Left colon (tissue), 2 donors: ENCODE measurements at regions of chr1 and their contacts with region 1.

Region 1: DNA sequence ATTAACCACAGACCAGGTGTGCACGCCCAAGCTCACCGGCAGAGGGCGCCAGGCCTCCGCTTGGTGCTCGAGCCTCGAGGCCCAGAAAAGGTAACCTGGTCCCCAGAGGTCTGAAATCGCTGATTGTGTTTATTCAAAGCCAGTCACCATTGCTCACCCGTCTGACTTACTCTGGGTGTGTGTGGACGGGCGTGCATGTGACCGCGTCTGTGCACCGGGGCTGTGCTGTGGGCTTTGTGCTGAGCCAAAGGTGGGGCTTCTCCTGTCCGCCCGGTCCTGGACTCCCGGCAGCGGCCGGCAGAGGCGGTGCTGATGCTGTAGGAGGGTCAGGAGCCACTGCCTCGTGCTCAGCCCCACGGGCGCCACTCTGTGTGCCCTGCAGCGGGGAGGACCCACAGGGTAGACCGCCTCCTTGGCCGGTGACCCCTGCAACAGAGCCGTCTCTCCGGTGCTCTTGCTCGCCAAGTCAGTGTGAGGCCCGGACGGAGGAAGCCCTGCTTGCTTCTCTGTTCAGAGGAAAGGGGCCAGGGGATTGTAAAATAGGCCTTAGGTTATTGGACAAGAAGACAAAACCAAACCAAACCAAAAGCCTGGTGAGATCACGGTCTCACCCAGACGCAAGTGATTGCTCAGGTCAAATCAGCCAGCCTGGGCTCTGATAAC is 32.0 kb upstream of the BTG2 start:
- DNase-seq: peak; percentile 87 to 92
- ATAC-seq: peak; percentile 79

Region 2: GRCh38 chr1:203326830-203327683 is 53.7 kb after region 1 on chr1:
- intact Hi-C with region 1: loop called in 1 of 2 experiments (anchors 5 kb)
- DNase-seq: peak; percentile 95 to 96
- ATAC-seq: peak; percentile 74

Region 3: DNA sequence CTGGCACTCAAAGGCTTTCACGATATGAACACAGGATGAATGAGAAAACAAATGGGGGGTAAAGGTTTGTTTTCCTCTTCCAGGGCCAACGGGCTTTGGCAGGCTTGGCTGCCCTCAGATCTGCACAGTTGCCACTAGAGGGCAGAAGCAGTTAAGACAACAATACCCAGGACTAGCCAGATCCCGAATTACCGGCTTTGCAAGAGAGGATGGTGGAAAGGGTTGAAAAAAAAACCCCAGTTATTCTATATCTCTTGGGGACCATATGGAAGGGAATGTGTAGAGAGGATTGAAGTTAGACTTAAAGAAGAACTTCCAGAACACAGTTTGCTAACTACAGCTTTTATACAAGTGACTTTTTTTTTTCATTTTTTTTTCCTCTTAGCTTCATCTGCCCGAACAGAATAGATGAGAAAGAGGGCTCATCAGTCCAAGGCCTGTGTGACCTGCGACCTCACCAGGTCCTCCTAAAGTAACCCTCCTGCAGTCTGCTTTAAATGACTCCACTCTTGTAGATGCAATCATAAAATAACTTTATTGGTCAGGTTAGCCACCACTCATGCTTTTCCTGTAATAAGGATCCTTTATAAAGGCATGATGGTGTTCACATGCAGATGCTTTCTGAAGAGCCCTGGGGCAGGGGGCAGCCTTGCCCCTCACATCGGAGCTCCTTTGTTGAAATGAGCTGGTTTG is 66.9 kb after region 1 on chr1:
- intact Hi-C with region 1: loop called (anchors 5 kb)
- DNase-seq: peak; percentile 69 to 77
- ATAC-seq: peak; percentile 76

Region 4: DNA sequence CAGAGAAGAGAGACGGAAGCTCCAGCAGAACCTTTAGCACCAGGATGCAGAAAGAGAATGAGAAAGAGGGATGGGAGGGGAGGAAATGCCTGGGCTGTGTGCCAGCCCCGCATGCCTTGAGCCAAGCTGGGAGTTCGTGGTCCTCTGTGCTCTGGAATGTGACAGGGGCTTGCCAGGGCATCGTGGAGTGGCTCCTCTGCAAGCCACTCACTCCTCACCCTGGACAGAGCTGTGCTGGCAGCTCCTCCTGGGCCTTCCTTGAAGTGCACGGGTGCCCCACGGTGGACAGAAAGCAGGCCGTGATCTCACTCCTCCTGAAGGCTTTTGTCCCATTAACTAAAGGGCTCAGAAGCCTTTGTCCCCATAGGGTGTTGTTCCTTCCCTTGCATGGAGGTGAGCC is 167.4 kb after region 1 on chr1:
- intact Hi-C with region 1: loop called in 1 of 2 experiments (anchors 5 kb)
- DNase-seq: peak; percentile 80 to 81
- ATAC-seq: peak; percentile 94

Region 5: DNA sequence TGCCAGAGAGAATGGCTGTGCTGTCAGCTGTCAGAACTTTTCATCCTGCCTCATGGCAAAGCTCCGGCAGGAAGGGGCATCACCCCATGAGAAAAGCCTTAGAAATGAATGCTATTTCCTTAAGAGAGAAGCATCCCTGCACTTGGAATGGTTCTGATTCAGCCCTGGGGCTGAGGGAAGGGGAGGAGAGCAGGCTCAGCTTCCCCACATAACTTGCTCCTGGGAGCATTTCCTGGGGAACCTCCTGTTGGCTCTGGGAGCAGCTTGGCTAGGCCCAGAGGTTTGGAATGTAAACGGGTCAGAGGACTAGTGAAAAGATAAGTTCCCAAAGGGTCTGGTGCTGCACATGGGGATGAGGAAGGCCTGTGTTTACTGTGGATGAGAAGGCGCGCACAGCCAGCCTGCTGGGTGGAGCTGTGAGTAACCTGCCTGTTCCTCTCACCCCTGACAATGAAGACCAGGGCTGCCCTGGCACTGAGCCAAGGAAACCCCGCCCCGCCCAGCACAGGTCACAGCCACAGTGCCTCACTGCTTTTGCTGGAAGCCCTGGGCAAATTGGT is 207.3 kb after region 1 on chr1:
- intact Hi-C with region 1: loop called in 1 of 2 experiments (anchors 5 kb)
- DNase-seq: peak; percentile 81 to 85
- ATAC-seq: peak; percentile 99